H1 (cell line): ENCODE measurements at regions of chr6 and their contacts with region 1.

Region 1: GRCh38 chr6:150928882-150929281 is 63.4 kb downstream of the MTHFD1L start:
- DNase-seq: no peak
- H3K4me3 ChIP-seq: no peak overlapping the region
- H3K27ac ChIP-seq: no peak overlapping the region
- H3K4me1 ChIP-seq: no peaks in the 10 kb centered on the region
- H3K27me3 ChIP-seq: no peaks in the 10 kb centered on the region
- CTCF ChIP-seq: peak; percentile 46 to 73 (median 68)
- EP300 ChIP-seq: no peak
- POLR2A ChIP-seq: no peak
- RAD21 ChIP-seq: peak; percentile 13 to 34; a peak in 2 of 4 replicates

Region 2: GRCh38 chr6:150177952-150178520 is 750.8 kb before region 1 on chr6:
- CTCF ChIA-PET with region 1: no interaction called
- POLR2A ChIA-PET with region 1: no interaction called
- DNase-seq: no peak
- H3K4me3 ChIP-seq: no peak overlapping the region
- H3K27ac ChIP-seq: no peak overlapping the region
- H3K4me1 ChIP-seq: no peaks in the 10 kb centered on the region
- H3K27me3 ChIP-seq: no peaks in the 10 kb centered on the region
- CTCF ChIP-seq: no peak
- EP300 ChIP-seq: no peak
- POLR2A ChIP-seq: no peak
- RAD21 ChIP-seq: no peak

Region 3: GRCh38 chr6:150905769-150906506 is 22.9 kb before region 1 on chr6:
- CTCF ChIA-PET with region 1: interaction called, 13 read pairs
- POLR2A ChIA-PET with region 1: interaction called, 5 read pairs
- DNase-seq: no peak
- H3K4me3 ChIP-seq: no peak overlapping the region
- H3K27ac ChIP-seq: no peak overlapping the region
- H3K4me1 ChIP-seq: no peaks in the 10 kb centered on the region
- H3K27me3 ChIP-seq: no peaks in the 10 kb centered on the region
- CTCF ChIP-seq: peak; percentile 57 to 72 (median 66)
- EP300 ChIP-seq: no peak
- POLR2A ChIP-seq: no peak
- RAD21 ChIP-seq: peak; percentile 22 to 36; a peak in 3 of 4 replicates

Region 4: DNA sequence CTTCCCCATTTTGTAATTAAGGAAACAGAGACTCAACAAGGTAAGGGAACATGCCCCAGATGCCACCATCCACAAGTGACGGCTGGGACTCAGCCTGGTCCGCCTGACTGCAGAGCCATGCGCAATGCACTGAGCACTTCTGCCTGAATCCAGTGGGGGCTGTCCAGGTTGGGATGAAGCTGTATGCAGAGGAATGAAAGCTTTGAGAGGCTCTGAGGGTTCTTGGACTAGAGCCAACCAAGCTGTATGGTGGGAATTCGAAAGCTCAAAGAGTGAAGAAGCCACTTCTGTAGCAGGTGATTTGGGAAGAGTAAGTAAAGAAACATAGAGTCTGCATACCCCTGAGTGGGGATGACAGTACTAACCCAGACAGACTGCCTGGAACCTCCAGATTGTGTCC is 183.2 kb after region 1 on chr6:
- CTCF ChIA-PET with region 1: no interaction called
- POLR2A ChIA-PET with region 1: no interaction called
- DNase-seq: no peak
- H3K4me3 ChIP-seq: no peak overlapping the region
- H3K27ac ChIP-seq: no peak overlapping the region
- H3K4me1 ChIP-seq: no peaks in the 10 kb centered on the region
- H3K27me3 ChIP-seq: no peaks in the 10 kb centered on the region
- CTCF ChIP-seq: no peak
- EP300 ChIP-seq: no peak
- POLR2A ChIP-seq: no peak
- RAD21 ChIP-seq: no peak